Activated CD4-positive, alpha-beta T cell treated with anti-CD3 and anti-CD28 coated beads, Interleukin-2, amount 10 ng/mL, durations not matched to agents 24 days and 14 days (primary cell): ENCODE measurements at regions of chr18 and their contacts with region 1.

Region 1: GRCh38 chr18:47175908-47176575 is at the start of gene IER3IP1:
- DNase-seq: peak; percentile 97
- H3K4me3 Mint-ChIP-seq: peak within 1 kb of the TSS; percentile 32
- H3K27ac Mint-ChIP-seq: peak within 1 kb of the TSS; percentile 68
- H3K4me1 Mint-ChIP-seq: peaks cover 2% of the 10 kb centered on the region
- H3K27me3 Mint-ChIP-seq: peaks cover 4% of the 10 kb centered on the region
- total RNA-seq, gene IER3IP1: 16.0 and 16.2 TPM in 2 replicates

Region 2: GRCh38 chr18:47120428-47120827 is 55.6 kb before region 1 on chr18:
- intact Hi-C with region 1: loop called (anchors 1 kb)
- DNase-seq: no peak
- H3K4me3 Mint-ChIP-seq: no peak overlapping the region
- H3K27ac Mint-ChIP-seq: peak overlapping the region; percentile 30
- H3K4me1 Mint-ChIP-seq: peaks cover 20% of the 10 kb centered on the region
- H3K27me3 Mint-ChIP-seq: no peaks in the 10 kb centered on the region

Region 3: GRCh38 chr18:47143899-47144485 is 32.0 kb before region 1 on chr18:
- intact Hi-C with region 1: loop called (anchors 5 kb)
- DNase-seq: no peak
- H3K4me3 Mint-ChIP-seq: no peak overlapping the region
- H3K27ac Mint-ChIP-seq: no peak overlapping the region
- H3K4me1 Mint-ChIP-seq: peaks cover 8% of the 10 kb centered on the region
- H3K27me3 Mint-ChIP-seq: no peaks in the 10 kb centered on the region

Region 4: GRCh38 chr18:47150029-47150823 is 25.8 kb before region 1 on chr18 and contains the start of gene HDHD2:
- intact Hi-C with region 1: loop called (anchors 1 kb)
- DNase-seq: peak; percentile 95
- H3K4me3 Mint-ChIP-seq: peak within 1 kb of the TSS; percentile 96
- H3K27ac Mint-ChIP-seq: peak within 1 kb of the TSS; percentile 95
- H3K4me1 Mint-ChIP-seq: peaks cover 27% of the 10 kb centered on the region
- H3K27me3 Mint-ChIP-seq: no peaks in the 10 kb centered on the region
- total RNA-seq, gene HDHD2: 37.7 and 40.6 TPM in 2 replicates

Region 5: GRCh38 chr18:47381975-47382570 is 206.0 kb after region 1 on chr18:
- intact Hi-C with region 1: no loop called
- DNase-seq: no peak
- H3K4me3 Mint-ChIP-seq: no peak overlapping the region
- H3K27ac Mint-ChIP-seq: no peak overlapping the region
- H3K4me1 Mint-ChIP-seq: no peaks in the 10 kb centered on the region
- H3K27me3 Mint-ChIP-seq: no peaks in the 10 kb centered on the region

Region 6: GRCh38 chr18:47944972-47945843 is 769.2 kb after region 1 on chr18:
- intact Hi-C with region 1: no loop called
- DNase-seq: no peak
- H3K4me3 Mint-ChIP-seq: no peak overlapping the region
- H3K27ac Mint-ChIP-seq: peak overlapping the region; percentile 23
- H3K4me1 Mint-ChIP-seq: peaks cover 14% of the 10 kb centered on the region
- H3K27me3 Mint-ChIP-seq: peaks cover 23% of the 10 kb centered on the region